AG04449 (cell line): ENCODE measurements at regions of chr22 and their contacts with region 1.

Region 1: GRCh38 chr22:22168190-22168940 is 76.2 kb upstream of the VPREB1 start:
- DNase-seq: no peak
- H3K4me3 ChIP-seq: peak overlapping the region; percentile 32
- CTCF ChIP-seq: no peak

Region 2: DNA sequence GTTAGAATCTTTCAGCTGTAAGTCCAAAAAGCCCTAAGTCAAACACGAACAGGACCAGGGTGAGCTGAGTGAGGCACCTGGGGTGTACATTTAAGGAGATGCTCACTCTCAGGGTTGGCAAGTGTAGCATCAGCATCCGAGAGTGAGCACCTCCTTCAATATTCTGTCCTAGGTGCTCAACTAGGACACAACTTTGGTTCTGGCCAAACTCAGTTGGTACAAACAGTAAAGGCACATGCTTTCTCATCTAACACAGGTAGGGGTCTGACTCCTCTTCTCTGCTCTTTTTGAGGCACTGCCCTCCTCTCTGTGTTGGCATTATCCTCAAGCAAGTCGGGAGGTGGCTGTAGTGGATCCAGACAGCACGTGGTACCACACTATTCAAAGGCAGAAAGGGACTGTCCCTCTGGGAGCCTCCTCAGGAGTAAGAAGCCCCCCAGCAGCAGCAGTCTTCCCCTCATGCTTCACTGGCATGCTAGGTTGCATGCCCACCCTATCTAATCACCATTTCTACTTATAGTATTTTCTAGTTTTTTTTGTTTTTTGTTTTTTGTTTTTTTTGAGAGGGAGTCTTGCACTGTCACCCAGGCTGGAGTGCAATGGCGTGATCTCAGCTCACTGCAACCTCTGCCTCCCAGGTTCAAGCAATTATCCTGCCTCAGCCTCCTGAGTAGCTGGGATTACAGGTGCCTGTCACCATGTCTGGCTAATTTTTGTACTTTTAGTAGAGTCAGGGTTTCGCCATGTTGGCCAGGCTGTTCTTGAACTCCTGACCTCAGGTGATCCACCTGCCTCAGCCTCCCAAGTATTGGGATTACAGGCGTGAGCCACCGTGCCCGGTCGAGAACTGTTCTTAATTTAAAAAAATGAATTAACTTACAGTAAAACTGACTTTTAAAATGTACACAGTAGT is 286.3 kb before region 1 on chr22:
- CTCF ChIA-PET with region 1: no interaction called
- POLR2A ChIA-PET with region 1: no interaction called
- DNase-seq: no peak
- H3K4me3 ChIP-seq: no peak overlapping the region
- CTCF ChIP-seq: no peak

Region 3: DNA sequence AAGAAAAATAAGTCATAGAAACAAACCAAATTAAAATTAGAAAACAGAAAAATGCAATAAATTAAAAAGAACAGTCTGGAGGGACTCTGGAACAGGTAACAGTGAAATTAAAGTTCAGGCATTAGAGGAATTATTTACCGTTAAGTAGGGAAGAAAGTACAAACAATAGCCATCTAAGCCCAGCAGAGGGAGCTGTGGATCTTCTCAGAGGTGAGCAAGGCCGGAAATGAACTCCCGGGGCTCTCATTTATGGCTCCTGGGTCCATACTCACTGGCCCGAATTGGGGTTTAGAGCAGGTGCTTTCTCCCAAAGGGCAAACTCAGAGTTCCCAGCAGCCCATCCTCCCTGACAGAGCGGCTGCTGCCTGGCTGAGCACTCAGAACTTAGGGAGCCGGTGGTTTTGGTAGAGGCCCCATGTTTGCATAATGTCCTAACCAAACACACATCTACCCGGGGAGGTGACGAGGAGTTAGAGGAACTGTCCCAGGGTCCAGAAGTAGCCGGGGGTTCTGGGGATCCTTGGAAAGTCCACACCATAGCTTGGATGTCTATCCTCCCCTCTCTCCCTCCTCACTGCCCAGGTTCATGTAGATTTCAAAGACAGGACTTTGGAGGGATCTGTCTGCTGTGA is 11.5 kb before region 1 on chr22:
- CTCF ChIA-PET with region 1: interaction called, 16 read pairs
- POLR2A ChIA-PET with region 1: no interaction called
- DNase-seq: peak; percentile 19
- H3K4me3 ChIP-seq: no peak overlapping the region
- CTCF ChIP-seq: peak; percentile 63

Region 4: GRCh38 chr22:22248878-22249277 is 80.5 kb after region 1 on chr22:
- CTCF ChIA-PET with region 1: no interaction called
- POLR2A ChIA-PET with region 1: no interaction called
- DNase-seq: no peak
- H3K4me3 ChIP-seq: no peak overlapping the region
- CTCF ChIP-seq: no peak